Natural killer cell (primary cell): ENCODE measurements at regions of chr11 and their contacts with region 1.

Region 1: DNA sequence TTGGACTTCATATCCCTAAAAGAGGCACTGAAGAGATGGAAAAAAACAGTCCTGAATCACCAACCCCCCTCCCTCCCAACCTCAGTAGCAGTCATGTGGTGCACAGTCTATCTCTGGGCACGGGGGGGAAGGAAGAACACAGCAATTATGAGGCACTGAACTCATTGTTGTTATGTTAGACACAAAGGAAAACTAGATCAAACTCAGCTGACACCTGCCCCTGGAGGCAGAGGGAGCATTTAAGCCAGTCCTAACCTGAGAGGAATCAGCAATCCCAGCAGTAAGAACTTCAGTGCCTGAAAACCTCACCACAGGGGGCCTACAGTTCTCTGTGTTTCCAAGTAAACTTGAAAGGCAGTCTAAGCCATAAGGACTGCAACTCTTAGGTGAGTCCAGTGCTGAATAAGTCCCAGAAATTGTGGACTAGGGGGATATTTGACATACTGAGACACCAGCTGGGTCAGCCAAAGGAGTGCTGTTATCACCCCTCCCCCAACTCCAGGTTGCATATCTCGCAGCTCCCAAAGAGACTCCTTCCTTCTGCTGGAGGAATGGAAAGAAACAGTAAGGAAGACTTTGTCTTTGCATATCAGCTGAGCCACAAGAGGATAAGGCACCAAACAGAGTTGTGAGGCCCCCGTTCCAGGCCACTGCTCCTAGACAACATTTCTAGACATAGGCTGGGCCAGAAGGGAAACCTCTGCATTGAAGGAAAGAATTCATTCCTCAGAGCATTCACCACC is 72.5 kb downstream of the GLYATL1 start:
- DNase-seq: no peak
- ATAC-seq: no peak
- H3K4me3 ChIP-seq: no peak overlapping the region
- H3K4me3 Mint-ChIP-seq: no peak overlapping the region
- H3K27ac ChIP-seq: no peak overlapping the region
- H3K27ac Mint-ChIP-seq: no peak overlapping the region
- H3K4me1 ChIP-seq: no peaks in the 10 kb centered on the region
- H3K4me1 Mint-ChIP-seq: no peaks in the 10 kb centered on the region
- H3K27me3 ChIP-seq: no peaks in the 10 kb centered on the region
- H3K27me3 Mint-ChIP-seq: peaks cover 0 to 8% of the 10 kb centered on the region in 2 donors
- CTCF ChIP-seq: no peak

Region 2: GRCh38 chr11:58845366-58845765 is 166.5 kb before region 1 on chr11:
- intact Hi-C with region 1: loop called (anchors 5 kb)
- DNase-seq: no peak
- ATAC-seq: no peak
- H3K4me3 ChIP-seq: no peak overlapping the region
- H3K4me3 Mint-ChIP-seq: no peak overlapping the region
- H3K27ac ChIP-seq: no peak overlapping the region
- H3K27ac Mint-ChIP-seq: no peak overlapping the region
- H3K4me1 ChIP-seq: no peaks in the 10 kb centered on the region
- H3K4me1 Mint-ChIP-seq: no peaks in the 10 kb centered on the region
- H3K27me3 ChIP-seq: no peaks in the 10 kb centered on the region
- H3K27me3 Mint-ChIP-seq: peaks cover 8 to 13% of the 10 kb centered on the region in 2 donors
- CTCF ChIP-seq: no peak

Region 3: GRCh38 chr11:58949184-58949583 is 62.6 kb before region 1 on chr11:
- intact Hi-C with region 1: no loop called
- DNase-seq: no peak
- ATAC-seq: no peak
- H3K4me3 ChIP-seq: no peak overlapping the region
- H3K4me3 Mint-ChIP-seq: no peak overlapping the region
- H3K27ac ChIP-seq: no peak overlapping the region
- H3K27ac Mint-ChIP-seq: no peak overlapping the region
- H3K4me1 ChIP-seq: no peaks in the 10 kb centered on the region
- H3K4me1 Mint-ChIP-seq: no peaks in the 10 kb centered on the region
- H3K27me3 ChIP-seq: no peaks in the 10 kb centered on the region
- H3K27me3 Mint-ChIP-seq: peaks cover 4 to 10% of the 10 kb centered on the region in 2 donors
- CTCF ChIP-seq: no peak

Region 4: DNA sequence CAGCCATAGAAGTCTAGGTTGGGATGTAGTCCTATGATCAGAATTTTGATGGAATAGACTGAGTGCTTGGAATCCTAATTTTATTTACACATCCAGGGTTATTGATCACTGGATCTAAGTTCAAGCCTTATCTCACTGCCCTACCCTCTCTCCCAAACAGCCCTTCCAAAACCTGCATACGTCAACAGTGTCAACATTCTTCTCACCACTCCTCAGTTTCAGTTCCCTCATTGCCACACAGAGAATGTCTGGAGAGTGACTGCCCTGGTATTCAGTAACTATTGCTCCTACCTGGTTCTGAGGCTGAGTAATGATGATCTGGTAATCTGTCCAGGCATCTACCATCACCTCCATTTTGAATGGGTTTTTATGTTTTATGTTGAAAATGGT is 12.5 kb before region 1 on chr11:
- intact Hi-C with region 1: no loop called
- DNase-seq: no peak
- ATAC-seq: no peak
- H3K4me3 ChIP-seq: no peak overlapping the region
- H3K4me3 Mint-ChIP-seq: no peak overlapping the region
- H3K27ac ChIP-seq: no peak overlapping the region
- H3K27ac Mint-ChIP-seq: no peak overlapping the region
- H3K4me1 ChIP-seq: no peaks in the 10 kb centered on the region
- H3K4me1 Mint-ChIP-seq: no peaks in the 10 kb centered on the region
- H3K27me3 ChIP-seq: no peaks in the 10 kb centered on the region
- H3K27me3 Mint-ChIP-seq: peaks cover 11 to 21% of the 10 kb centered on the region in 2 donors
- CTCF ChIP-seq: no peak